ENCODE measurements at regions of chr22 and their contacts with region 1.

Region 1: DNA sequence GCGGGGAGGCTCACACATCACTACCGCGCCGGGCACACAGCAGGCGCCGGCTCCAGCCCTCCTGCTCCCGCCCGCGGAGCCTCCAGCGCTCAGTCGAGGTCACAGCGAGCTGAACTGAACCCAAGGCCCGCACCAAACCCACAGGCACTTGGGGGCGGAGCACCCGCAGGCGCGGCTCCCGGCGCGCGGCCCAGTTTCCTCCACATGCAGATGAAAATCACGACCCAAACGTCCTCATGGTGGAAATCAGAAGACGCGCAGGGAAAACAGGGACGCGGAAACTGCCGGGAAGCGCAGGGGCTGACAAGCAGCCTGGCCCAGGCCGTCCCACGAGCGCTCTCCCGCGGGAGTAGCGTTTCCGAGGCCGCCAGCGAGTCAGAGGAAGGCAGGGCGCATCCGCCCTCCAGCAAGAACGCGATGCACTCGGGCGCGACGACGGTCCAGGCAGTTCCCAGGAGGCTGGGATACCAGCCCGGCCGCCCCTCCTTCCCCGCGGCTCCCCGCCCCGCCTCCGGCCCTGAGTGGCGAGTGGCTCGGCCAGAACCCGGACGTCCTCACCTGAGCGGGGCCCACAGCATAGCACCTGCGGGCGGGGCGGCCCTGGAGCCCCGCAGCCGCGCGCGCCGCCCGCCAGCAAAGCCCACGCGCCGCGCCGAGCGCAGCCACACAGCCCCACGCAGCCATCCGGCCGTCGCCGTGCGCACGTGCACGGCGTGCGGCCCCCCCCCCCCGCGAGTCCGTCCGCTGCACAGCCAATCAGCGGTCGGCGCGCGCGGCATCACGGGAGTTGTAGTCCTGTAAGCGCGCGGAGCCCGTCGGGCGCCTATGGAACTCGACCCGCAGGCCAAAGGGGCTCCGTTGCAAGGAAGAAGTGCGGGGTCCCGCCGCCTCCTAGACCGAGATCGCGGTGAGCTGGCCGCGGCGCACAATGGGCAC is at the start of gene HDHD5:
- DNase-seq: peak; percentile 79
- H3K4me3 ChIP-seq: peak within 1 kb of the TSS; percentile 38 to 57 (median 57)
- H3K27ac ChIP-seq: peak within 1 kb of the TSS; percentile 41
- H3K4me1 ChIP-seq: peaks cover 15% of the 10 kb centered on the region
- H3K27me3 ChIP-seq: no peaks in the 10 kb centered on the region
- CTCF ChIP-seq: no peak
- POLR2A ChIP-seq: no peak
- total RNA-seq, gene HDHD5: 28.1 and 29.1 TPM in 2 replicates

Region 2: GRCh38 chr22:17084554-17085276 is 74.1 kb before region 1 on chr22 and contains the start of gene IL17RA:
- CTCF ChIA-PET with region 1: no interaction called
- POLR2A ChIA-PET with region 1: no interaction called
- dilution Hi-C with region 1: no loop called
- intact Hi-C with region 1: loop called (anchors 1 kb)
- DNase-seq: peak; percentile 85
- H3K4me3 ChIP-seq: peak within 1 kb of the TSS; percentile 62 to 65 (median 64)
- H3K27ac ChIP-seq: peak within 1 kb of the TSS; percentile 52
- H3K4me1 ChIP-seq: peaks cover 18% of the 10 kb centered on the region
- H3K27me3 ChIP-seq: no peaks in the 10 kb centered on the region
- CTCF ChIP-seq: no peak
- POLR2A ChIP-seq: peak; percentile 76
- total RNA-seq, gene IL17RA: 13.0 and 19.0 TPM in 2 replicates

Region 3: GRCh38 chr22:17121227-17122195 is 37.3 kb before region 1 on chr22 and contains the start of gene TMEM121B:
- CTCF ChIA-PET with region 1: no interaction called
- POLR2A ChIA-PET with region 1: no interaction called
- dilution Hi-C with region 1: no loop called
- intact Hi-C with region 1: loop called (anchors 1 kb)
- DNase-seq: peak; percentile 23
- H3K4me3 ChIP-seq: peak within 1 kb of the TSS; percentile 16 to 36 (median 33)
- H3K27ac ChIP-seq: no peak within 1 kb of the TSS
- H3K4me1 ChIP-seq: peaks cover 6% of the 10 kb centered on the region
- H3K27me3 ChIP-seq: peaks cover 22 to 25% of the 10 kb centered on the region in 2 experiments
- CTCF ChIP-seq: no peak
- POLR2A ChIP-seq: no peak
- total RNA-seq, gene TMEM121B: 0.33 and 0.37 TPM in 2 replicates

Region 4: GRCh38 chr22:17188237-17188636 is 29.4 kb after region 1 on chr22:
- CTCF ChIA-PET with region 1: no interaction called
- POLR2A ChIA-PET with region 1: no interaction called
- dilution Hi-C with region 1: no loop called
- intact Hi-C with region 1: no loop called
- DNase-seq: no peak
- H3K4me3 ChIP-seq: no peak overlapping the region
- H3K27ac ChIP-seq: no peak overlapping the region
- H3K4me1 ChIP-seq: no peaks in the 10 kb centered on the region
- H3K27me3 ChIP-seq: no peaks in the 10 kb centered on the region
- CTCF ChIP-seq: no peak
- POLR2A ChIP-seq: no peak

Region 5: GRCh38 chr22:17199003-17199731 is 40.3 kb after region 1 on chr22:
- CTCF ChIA-PET with region 1: no interaction called
- POLR2A ChIA-PET with region 1: no interaction called
- dilution Hi-C with region 1: no loop called
- intact Hi-C with region 1: no loop called
- DNase-seq: no peak
- H3K4me3 ChIP-seq: peak overlapping the region; percentile 2 to 68 (median 48)
- H3K27ac ChIP-seq: peak overlapping the region; percentile 55
- H3K4me1 ChIP-seq: peaks cover 13% of the 10 kb centered on the region
- H3K27me3 ChIP-seq: peaks cover 2 to 3% of the 10 kb centered on the region in 2 experiments
- CTCF ChIP-seq: no peak
- POLR2A ChIP-seq: no peak